Esophagus muscularis mucosa (tissue), 4 donors: ENCODE measurements at regions of chr12 and their contacts with region 1.

Region 1: DNA sequence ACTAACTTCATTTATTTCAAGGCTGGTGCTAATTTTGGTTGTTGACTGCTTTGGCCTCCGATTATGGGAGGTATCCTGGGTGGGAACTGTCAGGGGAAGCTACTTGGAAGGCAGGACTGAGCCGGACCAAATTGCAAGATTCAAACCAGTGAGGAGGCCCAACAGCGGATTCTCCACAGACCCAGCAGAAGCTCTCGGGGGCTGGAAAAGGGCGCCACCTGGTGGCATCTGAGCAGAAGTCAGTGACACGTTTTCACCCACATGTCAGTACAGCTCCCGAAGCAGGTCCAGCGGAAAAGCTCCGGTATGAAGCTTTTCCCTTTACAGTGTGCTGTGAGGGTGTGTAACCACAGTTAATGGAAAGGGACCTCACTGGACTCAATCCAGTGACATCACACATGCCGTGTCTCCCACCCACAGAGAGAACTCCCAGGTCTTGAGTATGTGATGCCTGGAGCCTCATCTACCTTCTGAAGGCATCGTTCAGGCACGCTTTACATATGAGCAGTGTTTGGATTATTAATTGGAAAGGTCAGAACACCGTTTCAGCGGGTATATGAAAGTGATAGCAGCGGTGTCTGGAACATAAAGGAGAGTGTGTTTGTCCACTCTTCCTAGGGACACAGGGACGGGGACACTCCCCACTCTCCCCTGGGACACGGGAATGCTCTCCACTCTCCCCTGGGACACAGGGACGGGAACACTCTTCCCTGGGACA is 3.6 kb upstream of the P2RX2 start:
- DNase-seq: peak; percentile 95
- H3K4me3 ChIP-seq: no peak overlapping the region
- H3K27ac ChIP-seq: no peak overlapping the region
- H3K4me1 ChIP-seq: peaks cover 5 to 37% (median 33%) of the 10 kb centered on the region in 4 donors
- H3K27me3 ChIP-seq: peaks cover 0 to 66% (median 38%) of the 10 kb centered on the region in 4 donors
- CTCF ChIP-seq: peak; percentile 86 to 92 (median 92)
- EP300 ChIP-seq: no peak
- POLR2A ChIP-seq: no peak

Region 2: GRCh38 chr12:132153501-132154340 is 461.3 kb before region 1 on chr12:
- intact Hi-C with region 1: loop called (anchors 10 kb)
- DNase-seq: no peak
- H3K4me3 ChIP-seq: peak overlapping the region; percentile 30 to 53 (median 36)
- H3K27ac ChIP-seq: no peak overlapping the region
- H3K4me1 ChIP-seq: peaks cover 0 to 12% (median 9%) of the 10 kb centered on the region in 4 donors
- H3K27me3 ChIP-seq: no peaks in the 10 kb centered on the region
- CTCF ChIP-seq: peak; percentile 86 to 96 (median 88)
- EP300 ChIP-seq: no peak
- POLR2A ChIP-seq: no peak